Heart left ventricle (tissue), 16 donors: ENCODE measurements at regions of chr1 and their contacts with region 1.

Region 1: DNA sequence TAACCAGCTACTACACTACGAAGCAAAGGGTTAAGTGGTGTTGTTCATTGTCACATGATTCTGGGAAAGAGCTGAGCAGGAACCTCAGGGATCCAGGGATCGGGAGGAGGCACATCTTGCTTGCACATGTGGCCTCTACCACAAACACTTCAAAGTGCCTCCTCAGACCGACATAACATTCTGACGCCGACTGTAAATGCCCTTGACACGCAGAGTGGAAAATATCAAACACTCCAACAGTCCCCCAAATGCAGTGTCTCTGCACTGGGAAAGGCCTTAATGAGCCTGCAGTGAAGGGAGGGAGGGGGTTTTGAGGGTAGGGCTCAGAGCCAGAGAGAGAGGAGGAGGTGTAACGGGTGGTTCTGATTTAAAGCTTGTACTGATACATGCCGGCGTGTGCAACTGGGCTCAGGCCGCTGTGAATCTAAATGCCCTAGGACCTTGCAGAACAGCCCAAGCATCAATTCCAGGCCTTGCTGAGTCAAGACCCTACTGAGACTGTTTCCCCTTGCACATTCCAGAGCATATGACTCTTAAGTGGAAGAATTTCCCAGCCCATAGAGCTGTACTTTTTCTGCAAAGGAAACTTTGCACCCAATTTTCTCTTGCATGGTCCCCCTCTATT is 163.7 kb downstream of the NTMT2 start:
- DNase-seq: peak in 2 of 5 donors; percentile 8 to 25
- ATAC-seq: peak; percentile 35 to 69 (median 60)
- H3K4me3 ChIP-seq: no peak overlapping the region
- H3K27ac ChIP-seq: peak overlapping the region in 2 of 12 donors; percentile 15 to 19
- H3K4me1 ChIP-seq: peaks cover 0 to 49% (median 4%) of the 10 kb centered on the region in 12 donors
- H3K27me3 ChIP-seq: no peaks in the 10 kb centered on the region
- CTCF ChIP-seq: no peak
- POLR2A ChIP-seq: no peak

Region 2: GRCh38 chr1:170360601-170361000 is 51.1 kb after region 1 on chr1:
- intact Hi-C with region 1: loop called in 1 of 10 experiments (anchors 10 kb)
- DNase-seq: no peak
- ATAC-seq: no peak
- H3K4me3 ChIP-seq: no peak overlapping the region
- H3K27ac ChIP-seq: no peak overlapping the region
- H3K4me1 ChIP-seq: peaks cover 0 to under 1% (median 0%) of the 10 kb centered on the region in 12 donors
- H3K27me3 ChIP-seq: no peaks in the 10 kb centered on the region
- CTCF ChIP-seq: no peak
- POLR2A ChIP-seq: no peak